ENCODE measurements at regions of chr14 and their contacts with region 1.

Region 1: GRCh38 chr14:104768437-104769323 is 15.7 kb downstream of the SIVA1 start:
- DNase-seq: peak; percentile 80 to 100
- H3K4me3 ChIP-seq: peak overlapping the region in 1 of 4 experiments; percentile 42; a peak in 1 of 8 replicates
- H3K27ac ChIP-seq: no peak overlapping the region
- H3K4me1 ChIP-seq: peaks cover 0 to 11% (median 8%) of the 10 kb centered on the region in 4 experiments; a peak in 6 of 7 replicates
- H3K27me3 ChIP-seq: no peaks in the 10 kb centered on the region
- CTCF ChIP-seq: peak in 2 of 3 experiments; percentile 92 to 95; a peak in 3 of 4 replicates
- EP300 ChIP-seq: no peak
- POLR2A ChIP-seq: no peak; a peak in 1 of 3 replicates
- RAD21 ChIP-seq: peak; percentile 89 to 90

Region 2: GRCh38 chr14:104723648-104724406 is 44.9 kb before region 1 on chr14 and contains the start of gene ADSS1:
- CTCF ChIA-PET with region 1: interaction called, 13 read pairs
- POLR2A ChIA-PET with region 1: interaction called, 3 read pairs
- DNase-seq: peak in 1 of 2 experiments; percentile 84
- H3K4me3 ChIP-seq: peak within 1 kb of the TSS; percentile 55 to 88 (median 68)
- H3K27ac ChIP-seq: no peak within 1 kb of the TSS; the same call in 1 of the 2 replicates
- H3K4me1 ChIP-seq: peaks cover 0 to 18% (median 10%) of the 10 kb centered on the region in 4 experiments; a peak in 6 of 7 replicates
- H3K27me3 ChIP-seq: peaks cover 0 to 3% (median 0%) of the 10 kb centered on the region in 4 experiments; a peak in 1 of 7 replicates
- CTCF ChIP-seq: peak in 2 of 3 experiments; percentile 82 to 84; a peak in 3 of 4 replicates
- EP300 ChIP-seq: no peak
- POLR2A ChIP-seq: 0 out of 3 replicates have a peak, but pooled peaks of 1 of the 2 experiments have one; percentile 58
- RAD21 ChIP-seq: peak; percentile 8 to 42; a peak in 1 of 4 replicates
- total RNA-seq, gene ADSS1: 7.9 and 8.9 TPM in 2 replicates

Region 3: GRCh38 chr14:104786091-104786586 is 17.5 kb after region 1 on chr14:
- CTCF ChIA-PET with region 1: interaction called, 110 read pairs
- POLR2A ChIA-PET with region 1: interaction called, 4 read pairs
- DNase-seq: no peak
- H3K4me3 ChIP-seq: no peak overlapping the region
- H3K27ac ChIP-seq: no peak overlapping the region
- H3K4me1 ChIP-seq: no peaks in the 10 kb centered on the region
- H3K27me3 ChIP-seq: no peaks in the 10 kb centered on the region
- CTCF ChIP-seq: no peak
- EP300 ChIP-seq: no peak
- POLR2A ChIP-seq: no peak
- RAD21 ChIP-seq: no peak

Region 4: GRCh38 chr14:104805326-104805678 is 36.6 kb after region 1 on chr14:
- CTCF ChIA-PET with region 1: interaction called, 17 read pairs
- POLR2A ChIA-PET with region 1: interaction called, 4 read pairs
- DNase-seq: no peak
- H3K4me3 ChIP-seq: no peak overlapping the region
- H3K27ac ChIP-seq: no peak overlapping the region
- H3K4me1 ChIP-seq: peaks cover 0 to 4% (median 2%) of the 10 kb centered on the region in 4 experiments; a peak in 3 of 7 replicates
- H3K27me3 ChIP-seq: peaks cover 14 to 28% (median 20%) of the 10 kb centered on the region in 4 experiments
- CTCF ChIP-seq: no peak
- EP300 ChIP-seq: no peak
- POLR2A ChIP-seq: no peak
- RAD21 ChIP-seq: no peak

Region 5: DNA sequence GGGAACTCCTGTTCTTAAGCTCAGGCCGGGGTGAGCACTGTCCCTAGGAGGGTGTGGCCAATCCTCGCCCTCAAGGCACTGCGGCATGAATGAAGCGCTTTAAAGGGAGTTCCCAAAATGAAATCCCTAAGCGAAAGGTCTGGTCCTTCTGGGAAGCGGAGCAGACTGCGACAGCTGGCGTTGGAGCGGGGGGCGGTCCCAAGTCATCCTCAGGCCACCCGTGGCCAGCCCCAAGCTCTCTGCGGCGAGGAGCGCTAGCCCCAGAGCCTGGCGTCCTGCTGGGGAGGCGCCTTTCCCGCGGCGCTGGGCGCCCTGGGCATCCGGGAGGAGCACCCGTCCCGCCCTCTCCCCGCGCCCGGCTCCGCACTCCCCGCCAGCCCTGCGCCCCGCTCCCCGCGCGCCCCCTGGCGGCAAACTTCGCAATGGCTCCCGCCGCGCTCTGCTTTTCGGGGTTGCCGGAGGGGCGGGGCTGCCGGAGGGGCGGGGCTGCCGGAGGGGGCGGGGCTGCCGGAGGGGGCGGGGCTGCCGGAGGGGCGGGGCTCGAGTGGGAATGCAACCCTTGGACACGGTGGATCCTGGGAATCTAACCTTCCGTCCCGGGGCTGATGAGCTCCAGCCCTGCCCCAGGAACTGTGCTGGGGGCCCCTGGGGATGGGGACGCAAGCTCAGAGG is 57.6 kb after region 1 on chr14:
- CTCF ChIA-PET with region 1: interaction called, 37 read pairs
- POLR2A ChIA-PET with region 1: interaction called, 7 read pairs
- DNase-seq: peak in 1 of 2 experiments; percentile 100
- H3K4me3 ChIP-seq: peak overlapping the region; percentile 45 to 83 (median 76)
- H3K27ac ChIP-seq: no peak overlapping the region
- H3K4me1 ChIP-seq: peaks cover 0 to 7% (median 5%) of the 10 kb centered on the region in 4 experiments; a peak in 4 of 7 replicates
- H3K27me3 ChIP-seq: peaks cover 0 to 26% (median 19%) of the 10 kb centered on the region in 4 experiments; a peak in 6 of 7 replicates
- CTCF ChIP-seq: peak; percentile 37 to 78 (median 74)
- EP300 ChIP-seq: no peak
- POLR2A ChIP-seq: no peak
- RAD21 ChIP-seq: peak; percentile 53 to 66

Region 6: GRCh38 chr14:104895786-104896661 is 127.3 kb after region 1 on chr14:
- CTCF ChIA-PET with region 1: interaction called, 18 read pairs
- POLR2A ChIA-PET with region 1: no interaction called
- DNase-seq: peak in 1 of 2 experiments; percentile 46
- H3K4me3 ChIP-seq: no peak overlapping the region
- H3K27ac ChIP-seq: no peak overlapping the region
- H3K4me1 ChIP-seq: peaks cover 0 to 3% (median 0%) of the 10 kb centered on the region in 4 experiments; a peak in 1 of 7 replicates
- H3K27me3 ChIP-seq: no peaks in the 10 kb centered on the region
- CTCF ChIP-seq: no peak
- EP300 ChIP-seq: no peak
- POLR2A ChIP-seq: no peak
- RAD21 ChIP-seq: no peak

Region 7: DNA sequence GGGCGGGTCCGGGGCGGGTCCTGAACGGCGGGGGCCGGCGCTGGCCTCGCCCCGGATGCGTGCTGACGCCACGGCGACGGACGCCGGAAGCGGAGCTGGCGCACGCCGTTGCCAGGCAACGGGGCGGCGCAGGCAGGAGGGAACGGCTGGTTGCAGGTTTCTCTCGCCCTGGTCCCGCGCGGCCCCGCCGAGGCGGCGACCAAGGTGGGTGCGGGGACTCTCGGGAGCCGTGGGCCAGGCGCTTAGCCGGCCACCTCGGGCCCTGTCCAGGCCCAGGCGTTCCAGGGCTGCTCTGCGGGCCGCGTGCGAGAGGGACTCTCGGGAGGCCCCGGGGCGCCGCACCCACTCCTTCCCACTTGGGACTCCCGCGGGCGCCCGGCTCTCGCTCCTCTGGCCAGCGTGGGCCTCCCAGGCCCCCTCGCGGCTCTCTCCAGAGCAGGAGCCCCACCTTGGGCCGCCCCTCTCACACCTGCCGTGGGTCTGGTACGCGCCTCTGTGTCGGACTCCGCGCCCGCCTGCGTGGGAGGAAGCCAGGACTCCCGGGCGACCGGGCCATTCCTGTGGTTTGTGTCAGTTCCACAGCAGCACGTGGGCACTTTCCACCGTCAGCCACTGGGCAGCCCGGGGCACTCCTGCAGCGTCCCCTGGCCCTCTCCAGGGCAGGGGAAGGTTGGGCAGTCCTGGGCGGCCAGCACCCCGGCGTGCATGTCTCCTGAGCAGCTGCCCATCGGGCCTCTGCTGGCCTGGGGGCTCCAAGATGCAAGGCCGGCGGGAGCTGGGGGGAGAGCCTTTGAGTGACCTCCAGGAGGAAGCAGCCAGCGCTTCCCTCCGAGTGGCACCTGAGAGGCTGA is 217.2 kb after region 1 on chr14 and contains the start of gene CLBA1:
- CTCF ChIA-PET with region 1: no interaction called
- POLR2A ChIA-PET with region 1: no interaction called
- DNase-seq: peak in 1 of 2 experiments; percentile 84
- H3K4me3 ChIP-seq: peak within 1 kb of the TSS; percentile 52 to 78 (median 56)
- H3K27ac ChIP-seq: no peak within 1 kb of the TSS
- H3K4me1 ChIP-seq: peaks cover 0 to 7% (median 2%) of the 10 kb centered on the region in 4 experiments; a peak in 4 of 7 replicates
- H3K27me3 ChIP-seq: peaks cover 0 to 4% (median under 1%) of the 10 kb centered on the region in 4 experiments; a peak in 3 of 7 replicates
- CTCF ChIP-seq: no peak
- EP300 ChIP-seq: no peak
- POLR2A ChIP-seq: no peak
- RAD21 ChIP-seq: no peak
- total RNA-seq, gene CLBA1: 2.1 and 2.4 TPM in 2 replicates